Gastrocnemius medialis (tissue), 4 donors: ENCODE measurements at regions of chr18 and their contacts with region 1.

Region 1: GRCh38 chr18:21841570-21841969 is 101.0 kb downstream of the MIB1 start:
- DNase-seq: no peak
- ATAC-seq: no peak
- H3K4me3 ChIP-seq: no peak overlapping the region
- H3K27ac ChIP-seq: peak overlapping the region in 1 of 4 donors; percentile 11
- H3K4me1 ChIP-seq: peaks cover 13 to 18% of the 10 kb centered on the region in 2 donors
- H3K27me3 ChIP-seq: no peaks in the 10 kb centered on the region
- CTCF ChIP-seq: no peak
- POLR2A ChIP-seq: no peak

Region 2: DNA sequence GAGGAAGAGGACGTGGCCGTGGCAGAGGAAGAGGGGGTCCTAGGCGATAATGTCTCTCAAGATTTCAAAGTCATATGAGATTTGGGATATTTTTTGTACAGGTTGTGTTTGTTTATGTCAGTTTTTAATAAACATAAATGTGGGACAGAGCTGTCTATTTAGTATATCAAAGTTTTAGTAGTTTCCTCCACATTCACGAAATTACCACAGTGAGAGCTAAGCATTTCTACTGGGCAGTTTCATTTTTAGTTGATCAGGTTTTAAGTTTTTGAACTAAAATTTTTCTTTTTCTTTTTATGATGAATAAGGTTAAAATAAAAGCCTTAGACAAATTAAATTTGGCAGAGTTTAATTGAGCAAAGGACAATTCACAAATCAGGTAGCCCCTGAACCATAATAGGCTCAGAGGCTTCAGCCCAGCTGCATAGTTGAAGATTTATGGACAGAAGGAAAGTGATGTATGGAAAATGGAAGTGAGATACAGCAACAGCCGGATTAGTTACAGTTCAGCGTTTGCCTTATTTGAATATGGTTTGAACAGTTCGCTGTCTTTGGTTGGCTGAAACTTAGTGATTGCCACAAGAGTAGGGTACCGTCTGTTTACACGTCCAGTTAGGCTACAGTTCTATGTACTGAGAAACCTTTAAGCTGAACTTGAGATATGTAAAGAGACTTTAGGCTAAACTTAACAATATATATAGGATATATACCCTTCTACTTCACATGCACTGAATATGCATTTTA is 212.3 kb before region 1 on chr18:
- in situ Hi-C with region 1: no loop called
- intact Hi-C with region 1: no loop called
- DNase-seq: no peak
- ATAC-seq: no peak
- H3K4me3 ChIP-seq: no peak overlapping the region
- H3K27ac ChIP-seq: no peak overlapping the region
- H3K4me1 ChIP-seq: no peaks in the 10 kb centered on the region
- H3K27me3 ChIP-seq: no peaks in the 10 kb centered on the region
- CTCF ChIP-seq: no peak
- POLR2A ChIP-seq: no peak

Region 3: GRCh38 chr18:21786526-21786925 is 55.0 kb before region 1 on chr18:
- in situ Hi-C with region 1: no loop called
- intact Hi-C with region 1: loop called (anchors 10 kb)
- DNase-seq: no peak
- ATAC-seq: no peak
- H3K4me3 ChIP-seq: no peak overlapping the region
- H3K27ac ChIP-seq: no peak overlapping the region
- H3K4me1 ChIP-seq: no peaks in the 10 kb centered on the region
- H3K27me3 ChIP-seq: no peaks in the 10 kb centered on the region
- CTCF ChIP-seq: no peak
- POLR2A ChIP-seq: no peak